Endothelial cell of umbilical vein (primary cell): ENCODE measurements at regions of chr6 and their contacts with region 1.

Region 1: GRCh38 chr6:6057424-6058053 is 50.8 kb upstream of the NRN1 start:
- DNase-seq: peak; percentile 57
- H3K4me3 ChIP-seq: no peak overlapping the region
- H3K27ac ChIP-seq: no peak overlapping the region
- H3K4me1 ChIP-seq: no peaks in the 10 kb centered on the region
- H3K27me3 ChIP-seq: no peaks in the 10 kb centered on the region
- CTCF ChIP-seq: peak; percentile 34 to 50
- POLR2A ChIP-seq: no peak

Region 2: DNA sequence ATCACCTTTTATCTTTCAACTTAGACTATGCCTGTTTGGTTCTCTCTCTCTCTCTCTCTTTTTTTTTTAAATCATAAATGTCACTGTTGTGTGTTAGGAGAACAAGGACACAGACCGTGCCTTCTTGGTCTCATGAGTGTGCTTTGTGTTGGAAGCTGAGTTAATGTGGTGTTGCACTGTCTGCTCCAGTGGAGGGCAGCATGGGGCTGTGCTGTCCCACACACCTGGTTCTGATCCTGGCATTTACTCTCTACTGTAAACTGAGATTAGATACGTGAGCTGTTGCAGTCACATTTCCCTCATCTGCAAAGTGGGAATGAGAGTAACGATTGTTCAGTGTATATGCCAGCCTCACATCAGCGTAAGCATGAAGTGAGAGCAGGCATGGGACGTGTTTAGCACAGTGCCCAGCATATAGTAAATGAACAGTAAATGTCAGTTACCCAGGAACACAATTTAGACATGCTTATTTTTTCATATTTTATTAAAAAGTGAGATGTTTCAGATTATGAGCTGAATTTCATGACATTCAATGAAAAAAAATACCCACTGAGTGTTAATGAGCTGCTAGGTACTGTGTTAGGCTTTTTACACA is 635.1 kb before region 1 on chr6:
- CTCF ChIA-PET with region 1: interaction called, 10 read pairs
- POLR2A ChIA-PET with region 1: no interaction called
- dilution Hi-C with region 1: no loop called
- intact Hi-C with region 1: loop called (anchors 5 kb)
- DNase-seq: peak; percentile 40
- H3K4me3 ChIP-seq: no peak overlapping the region
- H3K27ac ChIP-seq: no peak overlapping the region
- H3K4me1 ChIP-seq: no peaks in the 10 kb centered on the region
- H3K27me3 ChIP-seq: no peaks in the 10 kb centered on the region
- CTCF ChIP-seq: peak; percentile 40 to 55
- POLR2A ChIP-seq: no peak

Region 3: DNA sequence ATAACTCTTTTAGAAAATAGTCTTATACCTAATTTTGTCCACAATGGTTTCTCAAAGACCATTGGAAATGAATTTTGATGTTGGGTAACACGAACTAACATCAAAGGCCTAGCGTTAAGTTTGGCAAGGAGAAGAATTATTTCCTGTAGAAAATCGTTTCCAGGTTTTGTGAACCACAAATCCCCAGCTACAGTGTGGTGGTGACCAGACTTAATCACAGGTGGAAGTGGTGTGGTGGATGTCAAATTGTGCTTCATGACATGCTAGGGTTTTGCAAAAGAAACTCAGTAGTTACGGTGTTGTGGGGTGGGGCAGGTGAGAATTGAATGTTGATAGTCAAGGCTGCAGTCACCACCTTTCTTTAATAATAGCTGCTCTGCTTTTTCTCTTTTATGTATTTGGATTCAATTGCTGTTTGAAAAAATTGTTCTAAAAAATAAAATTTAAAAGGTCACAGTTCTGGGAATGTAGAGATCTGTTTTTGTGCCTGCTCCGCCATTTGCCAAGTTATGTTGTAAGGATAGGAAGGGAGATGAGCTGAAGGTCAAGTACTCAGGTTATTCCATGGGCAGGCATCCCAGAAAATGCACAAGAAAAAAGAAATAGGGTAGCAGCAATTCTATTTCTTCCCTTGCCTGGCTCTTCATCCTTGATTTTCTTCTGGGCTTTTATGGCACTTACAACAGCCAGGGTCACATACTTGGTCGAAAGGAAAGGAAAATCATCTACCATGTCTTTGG is 179.4 kb after region 1 on chr6:
- CTCF ChIA-PET with region 1: no interaction called
- POLR2A ChIA-PET with region 1: no interaction called
- dilution Hi-C with region 1: no loop called
- intact Hi-C with region 1: no loop called
- DNase-seq: no peak
- H3K4me3 ChIP-seq: no peak overlapping the region
- H3K27ac ChIP-seq: no peak overlapping the region
- H3K4me1 ChIP-seq: no peaks in the 10 kb centered on the region
- H3K27me3 ChIP-seq: no peaks in the 10 kb centered on the region
- CTCF ChIP-seq: no peak
- POLR2A ChIP-seq: no peak

Region 4: GRCh38 chr6:6315660-6316059 is 258.1 kb after region 1 on chr6:
- CTCF ChIA-PET with region 1: interaction called, 7 read pairs
- POLR2A ChIA-PET with region 1: no interaction called
- dilution Hi-C with region 1: no loop called
- intact Hi-C with region 1: loop called (anchors 1 kb)
- DNase-seq: peak; percentile 46
- H3K4me3 ChIP-seq: no peak overlapping the region
- H3K27ac ChIP-seq: no peak overlapping the region
- H3K4me1 ChIP-seq: peaks cover 4% of the 10 kb centered on the region
- H3K27me3 ChIP-seq: peaks cover 4 to 5% of the 10 kb centered on the region in 2 experiments
- CTCF ChIP-seq: peak; percentile 70 to 77
- POLR2A ChIP-seq: no peak

Region 5: DNA sequence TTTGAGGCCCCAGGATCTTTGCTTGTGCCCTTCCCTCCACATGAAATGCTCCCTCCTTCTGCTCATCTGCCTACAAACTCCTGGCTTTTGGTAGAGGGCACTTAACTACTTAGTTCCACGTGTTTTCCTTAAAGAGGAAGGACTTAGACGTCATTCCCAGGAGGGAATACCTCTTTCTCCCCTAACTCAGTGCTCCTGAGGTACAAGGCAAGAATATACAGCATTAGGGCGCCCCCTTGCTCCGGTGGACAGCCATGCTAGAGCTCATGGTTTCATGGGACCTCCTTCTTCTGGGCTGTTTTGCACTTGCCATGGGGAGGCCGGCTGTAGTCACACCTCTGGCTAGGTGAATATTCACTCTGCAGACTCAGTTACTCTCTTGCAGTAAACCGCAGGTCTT is 437.1 kb after region 1 on chr6:
- CTCF ChIA-PET with region 1: no interaction called
- POLR2A ChIA-PET with region 1: no interaction called
- dilution Hi-C with region 1: no loop called
- intact Hi-C with region 1: loop called (anchors 2 kb)
- DNase-seq: no peak
- H3K4me3 ChIP-seq: no peak overlapping the region
- H3K27ac ChIP-seq: no peak overlapping the region
- H3K4me1 ChIP-seq: no peaks in the 10 kb centered on the region
- H3K27me3 ChIP-seq: no peaks in the 10 kb centered on the region
- CTCF ChIP-seq: no peak
- POLR2A ChIP-seq: no peak